BJ (cell line): ENCODE measurements at regions of chr3 and their contacts with region 1.

Region 1: GRCh38 chr3:161893972-161894371 is 397.4 kb downstream of the OTOL1 start:
- DNase-seq: peak; percentile 44
- H3K4me3 ChIP-seq: no peak overlapping the region
- H3K27me3 ChIP-seq: no peaks in the 10 kb centered on the region
- CTCF ChIP-seq: no peak

Region 2: GRCh38 chr3:161879470-161879869 is 14.5 kb before region 1 on chr3:
- CTCF ChIA-PET with region 1: no interaction called
- POLR2A ChIA-PET with region 1: no interaction called
- DNase-seq: no peak
- H3K4me3 ChIP-seq: no peak overlapping the region
- H3K27me3 ChIP-seq: no peaks in the 10 kb centered on the region
- CTCF ChIP-seq: no peak

Region 3: DNA sequence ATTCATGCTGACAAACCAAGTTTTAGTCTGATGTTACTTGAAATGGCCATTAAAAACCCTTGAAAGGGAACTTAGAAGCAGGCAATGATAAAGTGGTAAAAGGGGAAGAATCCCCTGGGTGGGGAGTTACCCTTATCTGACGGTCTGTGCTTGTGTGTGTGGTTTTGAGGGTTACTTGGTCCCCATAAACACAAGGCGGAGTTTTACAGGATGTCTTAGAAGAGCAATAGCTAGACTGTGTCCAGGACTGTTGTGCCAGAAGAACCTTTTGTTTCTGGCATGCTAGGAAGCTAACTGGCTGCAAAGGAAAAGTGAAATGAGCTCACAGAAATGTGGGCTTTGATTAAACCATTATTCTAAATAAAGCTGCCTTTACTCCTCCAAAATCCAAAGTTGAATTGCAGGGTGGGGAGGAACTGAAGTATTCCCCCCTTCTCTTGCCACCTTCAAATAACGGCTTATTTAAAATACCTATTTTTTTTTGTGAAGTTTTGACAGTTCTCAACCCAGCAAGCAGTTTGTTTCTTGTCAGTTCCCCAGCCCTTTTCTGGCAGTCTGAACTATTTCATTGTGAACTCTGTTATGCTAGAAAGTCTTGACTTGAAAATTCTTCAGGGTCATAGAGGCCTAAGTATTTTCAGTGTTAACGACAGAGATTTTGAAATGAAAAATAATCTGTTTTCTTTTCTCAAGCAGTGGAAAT is 46.1 kb after region 1 on chr3:
- CTCF ChIA-PET with region 1: no interaction called
- POLR2A ChIA-PET with region 1: no interaction called
- DNase-seq: no peak
- H3K4me3 ChIP-seq: no peak overlapping the region
- H3K27me3 ChIP-seq: no peaks in the 10 kb centered on the region
- CTCF ChIP-seq: no peak

Region 4: DNA sequence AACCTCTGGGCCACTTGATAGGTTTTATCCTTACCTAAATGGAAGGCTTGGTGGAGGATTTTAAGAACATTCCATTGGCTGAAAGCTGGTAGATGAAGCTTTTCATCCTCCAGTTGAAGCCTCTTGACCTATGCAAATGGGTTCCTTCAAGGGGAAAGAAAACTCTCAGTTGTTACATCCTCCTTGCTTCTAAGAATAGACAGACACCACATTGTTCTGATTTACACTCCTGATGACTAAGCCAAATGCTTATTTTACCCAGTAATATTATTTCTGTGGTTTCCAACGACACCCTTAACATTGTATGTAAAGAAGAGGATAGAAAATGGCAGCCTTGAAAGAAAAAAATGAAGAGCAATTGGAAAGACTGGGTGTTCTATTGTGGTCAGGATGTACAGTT is 83.1 kb after region 1 on chr3:
- CTCF ChIA-PET with region 1: no interaction called
- POLR2A ChIA-PET with region 1: no interaction called
- DNase-seq: peak; percentile 19
- H3K4me3 ChIP-seq: no peak overlapping the region
- H3K27me3 ChIP-seq: no peaks in the 10 kb centered on the region
- CTCF ChIP-seq: no peak

Region 5: GRCh38 chr3:162073422-162073975 is 179.5 kb after region 1 on chr3:
- CTCF ChIA-PET with region 1: no interaction called
- POLR2A ChIA-PET with region 1: interaction called, 12 read pairs
- DNase-seq: no peak
- H3K4me3 ChIP-seq: no peak overlapping the region
- H3K27me3 ChIP-seq: no peaks in the 10 kb centered on the region
- CTCF ChIP-seq: no peak

Region 6: GRCh38 chr3:162269636-162270458 is 375.9 kb after region 1 on chr3:
- CTCF ChIA-PET with region 1: no interaction called
- POLR2A ChIA-PET with region 1: no interaction called
- DNase-seq: no peak
- H3K4me3 ChIP-seq: no peak overlapping the region
- H3K27me3 ChIP-seq: no peaks in the 10 kb centered on the region
- CTCF ChIP-seq: no peak